Ovary (tissue), 10 donors: ENCODE measurements at regions of chr3 and their contacts with region 1.

Region 1: GRCh38 chr3:34012102-34012461 is 213.7 kb downstream of the PDCD6IP start:
- DNase-seq: no peak
- H3K4me3 ChIP-seq: no peak overlapping the region
- H3K27ac ChIP-seq: no peak overlapping the region
- H3K4me1 ChIP-seq: no peaks in the 10 kb centered on the region
- H3K27me3 ChIP-seq: no peaks in the 10 kb centered on the region
- CTCF ChIP-seq: no peak
- EP300 ChIP-seq: no peak
- POLR2A ChIP-seq: no peak

Region 2: DNA sequence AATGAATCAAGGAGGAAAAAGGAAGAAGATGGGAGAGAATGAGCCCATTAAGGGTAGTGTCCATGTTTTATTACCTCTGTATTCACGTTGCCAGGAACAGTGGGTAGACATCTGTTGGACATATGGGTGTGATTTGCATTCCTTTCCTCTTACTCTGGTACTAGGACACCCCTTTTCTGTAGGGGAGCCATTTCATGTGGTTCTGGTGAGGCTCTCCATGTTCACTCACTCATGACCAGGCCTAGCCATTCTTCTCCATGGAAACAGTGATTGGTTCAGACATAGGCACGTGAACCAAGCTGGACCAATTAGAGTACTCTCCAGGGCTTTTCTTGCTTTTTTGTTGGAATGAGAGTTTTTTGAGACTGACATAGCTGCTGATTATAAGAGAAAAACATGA is 253.2 kb before region 1 on chr3:
- intact Hi-C with region 1: loop called in 1 of 4 experiments (anchors 5 kb)
- DNase-seq: no peak
- H3K4me3 ChIP-seq: no peak overlapping the region
- H3K27ac ChIP-seq: no peak overlapping the region
- H3K4me1 ChIP-seq: no peaks in the 10 kb centered on the region
- H3K27me3 ChIP-seq: no peaks in the 10 kb centered on the region
- CTCF ChIP-seq: no peak
- EP300 ChIP-seq: no peak
- POLR2A ChIP-seq: no peak

Region 3: DNA sequence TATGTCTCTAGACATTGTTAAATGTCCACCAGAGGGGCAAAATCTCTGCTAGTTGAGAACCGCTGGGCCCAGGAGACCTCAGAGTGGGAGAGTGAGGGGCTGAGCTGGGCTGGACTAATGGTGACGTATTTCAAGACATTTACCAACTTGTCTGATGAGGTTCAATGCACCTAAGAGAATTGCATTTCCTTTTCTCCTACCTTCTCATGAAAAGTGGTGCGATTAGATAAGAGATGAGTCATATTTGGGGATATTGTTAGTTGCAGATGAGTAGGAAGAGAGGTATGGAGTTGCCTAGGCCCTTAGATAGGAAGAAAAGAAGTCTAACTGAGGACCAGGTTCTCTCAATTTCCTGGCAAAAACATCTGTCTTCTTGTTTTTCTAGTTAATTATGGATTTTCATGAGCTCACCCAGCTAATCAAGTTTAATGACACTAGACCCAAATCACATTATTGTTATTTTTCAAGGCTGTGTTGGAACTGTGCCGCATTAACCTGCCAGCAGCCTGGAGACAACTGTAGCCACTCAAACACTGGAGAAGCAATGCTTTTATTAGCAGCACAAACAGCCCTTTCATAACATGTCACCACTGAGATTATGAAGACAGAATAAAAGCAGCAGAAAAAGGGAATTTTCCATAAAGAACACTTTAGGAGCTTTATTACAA is 69.5 kb before region 1 on chr3:
- intact Hi-C with region 1: no loop called
- DNase-seq: no peak
- H3K4me3 ChIP-seq: no peak overlapping the region
- H3K27ac ChIP-seq: no peak overlapping the region
- H3K4me1 ChIP-seq: no peaks in the 10 kb centered on the region
- H3K27me3 ChIP-seq: no peaks in the 10 kb centered on the region
- CTCF ChIP-seq: no peak
- EP300 ChIP-seq: no peak
- POLR2A ChIP-seq: no peak

Region 4: GRCh38 chr3:33962396-33962795 is 49.7 kb before region 1 on chr3:
- intact Hi-C with region 1: no loop called
- DNase-seq: no peak
- H3K4me3 ChIP-seq: no peak overlapping the region
- H3K27ac ChIP-seq: no peak overlapping the region
- H3K4me1 ChIP-seq: no peaks in the 10 kb centered on the region
- H3K27me3 ChIP-seq: no peaks in the 10 kb centered on the region
- CTCF ChIP-seq: no peak
- EP300 ChIP-seq: no peak
- POLR2A ChIP-seq: no peak